AG04450 (cell line): ENCODE measurements at regions of chr19 and their contacts with region 1.

Region 1: DNA sequence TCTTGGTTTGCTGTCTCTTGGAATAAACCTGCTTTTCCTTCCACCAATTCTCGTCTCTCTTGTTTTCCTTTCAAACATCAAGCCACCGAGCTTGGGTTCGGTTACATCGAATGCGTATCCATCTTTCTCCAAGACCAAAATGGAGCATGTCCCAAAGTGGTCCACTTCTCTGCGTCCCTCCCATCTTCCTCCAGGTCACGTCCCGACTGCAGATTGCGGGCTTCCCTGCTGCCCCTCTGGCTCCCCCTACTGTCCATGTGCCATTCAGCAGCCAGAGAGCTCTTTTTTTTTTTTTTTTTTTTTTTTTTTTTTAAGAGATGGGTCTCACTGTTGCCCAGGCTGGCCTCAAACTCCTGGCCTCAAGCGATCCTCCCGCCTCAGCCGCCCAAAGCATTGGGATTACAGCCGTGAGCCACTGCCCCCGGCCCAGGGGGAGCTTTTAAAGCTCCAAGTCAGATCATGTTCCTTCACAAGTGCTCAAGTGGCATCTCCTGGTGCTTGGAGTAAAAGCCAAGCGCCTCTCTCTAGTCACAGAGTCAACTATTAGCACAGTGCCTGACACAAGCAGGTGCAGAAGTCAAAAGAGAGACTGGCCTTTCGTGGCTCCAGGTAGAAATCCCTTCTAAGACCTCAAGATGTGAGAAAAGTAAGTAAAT is 10.0 kb downstream of the COL5A3 start:
- DNase-seq: no peak
- H3K4me3 ChIP-seq: no peak overlapping the region
- H3K27ac ChIP-seq: no peak overlapping the region
- H3K27me3 ChIP-seq: no peaks in the 10 kb centered on the region
- CTCF ChIP-seq: peak; percentile 95

Region 2: DNA sequence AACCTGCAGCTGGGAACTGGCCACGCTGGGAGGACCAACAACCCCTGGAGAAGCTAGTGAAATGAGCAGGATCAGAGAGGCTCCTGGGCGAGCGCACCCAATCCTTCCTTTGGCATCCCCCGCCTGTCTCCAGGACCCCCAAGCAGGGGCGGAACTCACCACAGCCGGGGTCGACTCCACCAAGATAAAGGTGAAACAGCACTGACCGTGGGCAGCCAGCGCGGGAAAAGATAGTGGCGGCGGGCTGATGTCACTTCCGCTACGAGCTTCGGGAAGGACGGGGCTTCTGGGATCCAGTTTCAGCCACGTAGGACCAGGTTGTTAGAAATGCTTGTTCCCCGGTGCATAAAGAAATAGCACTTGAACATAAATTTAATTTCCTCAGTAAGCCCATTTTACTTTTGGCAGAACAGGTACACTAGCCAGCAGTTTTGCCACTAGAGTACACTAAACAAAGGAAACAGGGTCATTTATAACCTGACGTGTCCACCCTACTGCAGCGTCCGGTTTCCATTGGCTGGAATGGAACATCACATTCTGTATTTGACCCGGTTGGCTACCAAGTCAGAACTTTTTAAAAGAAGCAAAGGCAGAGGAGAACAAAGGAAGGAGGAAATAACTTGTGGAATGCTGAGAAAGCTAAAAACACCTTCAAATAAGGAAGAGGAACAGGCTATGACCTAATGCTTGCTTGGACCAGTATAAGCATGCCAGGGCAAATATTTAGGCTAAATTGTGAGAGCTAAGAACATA is 299.9 kb before region 1 on chr19:
- CTCF ChIA-PET with region 1: no interaction called
- POLR2A ChIA-PET with region 1: no interaction called
- DNase-seq: no peak
- H3K4me3 ChIP-seq: no peak overlapping the region
- H3K27ac ChIP-seq: no peak overlapping the region
- H3K27me3 ChIP-seq: no peaks in the 10 kb centered on the region
- CTCF ChIP-seq: no peak

Region 3: GRCh38 chr19:9923440-9923839 is 76.9 kb before region 1 on chr19:
- CTCF ChIA-PET with region 1: interaction called, 14 read pairs
- POLR2A ChIA-PET with region 1: no interaction called
- DNase-seq: no peak
- H3K4me3 ChIP-seq: no peak overlapping the region
- H3K27ac ChIP-seq: no peak overlapping the region
- H3K27me3 ChIP-seq: no peaks in the 10 kb centered on the region
- CTCF ChIP-seq: no peak

Region 4: GRCh38 chr19:9939301-9939913 is 60.9 kb before region 1 on chr19:
- CTCF ChIA-PET with region 1: interaction called, 28 read pairs
- POLR2A ChIA-PET with region 1: interaction called, 11 read pairs
- DNase-seq: no peak
- H3K4me3 ChIP-seq: no peak overlapping the region
- H3K27ac ChIP-seq: no peak overlapping the region
- H3K27me3 ChIP-seq: peaks cover 22% of the 10 kb centered on the region
- CTCF ChIP-seq: no peak

Region 5: GRCh38 chr19:9958379-9958821 is 41.9 kb before region 1 on chr19:
- CTCF ChIA-PET with region 1: interaction called, 27 read pairs
- POLR2A ChIA-PET with region 1: no interaction called
- DNase-seq: peak; percentile 69
- H3K4me3 ChIP-seq: no peak overlapping the region
- H3K27ac ChIP-seq: no peak overlapping the region
- H3K27me3 ChIP-seq: no peaks in the 10 kb centered on the region
- CTCF ChIP-seq: no peak

Region 6: GRCh38 chr19:9986787-9987281 is 13.5 kb before region 1 on chr19:
- CTCF ChIA-PET with region 1: interaction called, 57 read pairs
- POLR2A ChIA-PET with region 1: no interaction called
- DNase-seq: no peak
- H3K4me3 ChIP-seq: no peak overlapping the region
- H3K27ac ChIP-seq: no peak overlapping the region
- H3K27me3 ChIP-seq: no peaks in the 10 kb centered on the region
- CTCF ChIP-seq: no peak

Region 7: DNA sequence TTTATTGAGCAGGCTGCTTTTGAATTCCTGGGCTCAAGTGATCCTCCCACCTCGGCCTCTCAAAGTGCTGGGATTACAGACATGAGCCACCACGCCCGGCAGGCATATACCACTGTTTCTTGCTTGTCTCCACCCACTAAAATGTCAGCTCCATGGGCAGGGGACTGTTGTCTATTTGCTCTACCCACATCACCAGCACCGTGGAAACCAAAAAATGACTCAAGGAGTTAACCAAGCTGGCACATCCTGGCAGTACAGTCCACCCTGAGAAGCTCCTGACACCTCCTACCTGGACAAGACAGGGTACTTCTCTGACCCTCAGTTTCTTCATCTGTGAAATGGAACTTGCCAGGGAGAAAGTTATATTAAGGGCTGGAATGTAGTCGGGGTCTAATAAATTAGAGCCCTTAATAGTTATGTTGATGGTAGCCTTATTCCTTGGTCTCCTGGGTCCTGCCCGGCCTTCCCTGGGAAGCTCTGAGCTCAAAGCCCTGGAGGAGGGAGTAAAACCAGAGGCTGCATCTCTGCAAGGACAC is 26.9 kb after region 1 on chr19:
- CTCF ChIA-PET with region 1: interaction called, 30 read pairs
- POLR2A ChIA-PET with region 1: interaction called, 3 read pairs
- DNase-seq: no peak
- H3K4me3 ChIP-seq: no peak overlapping the region
- H3K27ac ChIP-seq: peak overlapping the region; percentile 21
- H3K27me3 ChIP-seq: peaks cover 15% of the 10 kb centered on the region
- CTCF ChIP-seq: no peak

Region 8: DNA sequence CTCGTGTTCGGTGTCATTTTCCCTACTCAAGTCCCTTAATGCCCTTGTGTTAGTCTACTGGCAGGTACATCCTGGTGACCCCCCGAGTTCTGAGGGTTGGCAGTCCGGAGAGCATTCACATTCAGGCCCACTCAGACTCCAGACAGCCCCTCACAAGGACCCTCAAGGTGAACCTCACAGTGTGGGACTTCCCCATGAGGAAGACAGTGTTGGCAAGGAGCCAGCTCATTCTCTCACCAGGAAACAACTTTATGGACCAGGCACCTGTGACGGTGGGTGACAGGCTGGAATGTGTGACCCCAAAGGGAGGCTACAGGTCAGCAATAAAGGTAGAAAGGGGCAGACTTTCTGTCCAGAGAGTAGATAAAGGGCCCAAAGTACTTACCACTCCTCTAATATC is 37.5 kb after region 1 on chr19:
- CTCF ChIA-PET with region 1: no interaction called
- POLR2A ChIA-PET with region 1: no interaction called
- DNase-seq: no peak
- H3K4me3 ChIP-seq: no peak overlapping the region
- H3K27ac ChIP-seq: no peak overlapping the region
- H3K27me3 ChIP-seq: peaks cover 38% of the 10 kb centered on the region
- CTCF ChIP-seq: no peak